PC-9 (cell line): ENCODE measurements at regions of chr3 and their contacts with region 1.

Region 1: DNA sequence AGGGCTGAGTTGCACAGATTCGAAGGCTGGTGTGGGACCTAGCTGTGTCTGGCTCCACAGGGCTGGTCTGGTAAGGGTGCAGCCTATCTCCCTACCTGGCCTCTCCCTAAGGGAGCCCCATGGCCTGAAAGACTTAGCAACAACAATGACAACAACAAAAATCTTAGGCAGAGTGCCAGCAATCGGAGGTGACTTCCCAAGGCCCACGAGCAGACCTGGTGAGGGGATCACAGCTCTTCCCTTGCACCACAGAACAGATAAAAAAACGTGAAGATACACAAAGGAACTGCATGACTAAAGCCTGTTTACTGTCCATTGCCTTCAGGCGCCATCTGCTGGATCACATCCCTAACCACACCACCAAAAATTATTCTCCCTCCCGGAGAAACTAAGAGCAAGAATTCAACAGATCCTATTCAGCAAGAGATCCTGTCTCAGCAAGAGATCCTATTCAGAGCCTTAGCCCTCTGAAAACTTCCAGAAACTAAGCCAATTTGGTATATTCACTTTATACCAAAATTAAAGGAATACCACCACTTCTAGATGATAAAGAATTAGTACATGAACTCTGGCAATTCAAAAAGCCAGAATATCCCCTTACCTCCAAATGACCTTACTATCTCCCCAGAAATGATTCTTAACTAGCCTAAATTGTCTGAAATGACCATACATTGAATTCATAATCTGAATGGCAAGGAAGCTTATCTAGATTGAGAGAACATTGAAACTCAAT is 24.1 kb upstream of the OR5K4 start:
- DNase-seq: peak; percentile 44 to 46
- H3K4me3 ChIP-seq: no peak overlapping the region
- H3K27ac ChIP-seq: no peak overlapping the region
- H3K4me1 ChIP-seq: no peaks in the 10 kb centered on the region
- H3K27me3 ChIP-seq: no peaks in the 10 kb centered on the region
- CTCF ChIP-seq: peak; percentile 91

Region 2: DNA sequence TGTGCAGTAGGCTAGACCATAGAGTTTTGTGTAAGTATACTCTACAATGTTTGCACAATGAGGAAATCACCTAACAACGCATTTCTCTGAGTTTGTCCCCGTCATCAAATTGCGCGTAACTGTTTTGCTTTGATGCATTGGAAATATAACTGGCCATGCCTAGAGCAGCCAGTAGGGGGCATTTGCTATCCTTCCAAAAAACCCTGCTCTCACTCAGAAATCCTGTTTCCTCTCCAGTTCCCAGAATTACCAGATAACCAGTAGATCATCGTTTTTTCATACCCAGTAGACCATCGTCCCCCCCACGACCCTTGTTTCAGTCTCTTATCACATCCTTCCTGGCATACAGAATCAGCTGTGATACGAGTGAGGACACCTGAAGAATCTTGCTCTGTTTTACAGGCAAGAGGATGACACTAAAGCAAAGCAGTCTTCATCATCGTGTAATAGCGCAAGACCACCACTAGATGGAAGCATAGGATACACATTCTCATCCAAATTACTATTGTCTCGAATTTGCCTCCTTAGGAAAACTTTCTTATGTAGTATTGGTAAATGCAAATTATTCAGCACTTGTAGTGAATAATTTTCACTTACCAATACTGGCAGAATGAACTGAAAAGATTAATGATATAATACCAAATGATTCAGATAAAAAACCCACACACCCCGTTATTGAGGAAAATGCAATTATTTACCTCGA is 290.1 kb before region 1 on chr3:
- CTCF ChIA-PET with region 1: interaction called, 16 read pairs
- POLR2A ChIA-PET with region 1: no interaction called
- intact Hi-C with region 1: loop called (anchors 1 kb)
- DNase-seq: peak; percentile 74 to 81
- H3K4me3 ChIP-seq: peak overlapping the region; percentile 50; the same call in 1 of the 2 replicates
- H3K27ac ChIP-seq: no peak overlapping the region
- H3K4me1 ChIP-seq: peaks cover 9% of the 10 kb centered on the region; the same call in 1 of the 2 replicates
- H3K27me3 ChIP-seq: no peaks in the 10 kb centered on the region
- CTCF ChIP-seq: peak; percentile 100

Region 3: DNA sequence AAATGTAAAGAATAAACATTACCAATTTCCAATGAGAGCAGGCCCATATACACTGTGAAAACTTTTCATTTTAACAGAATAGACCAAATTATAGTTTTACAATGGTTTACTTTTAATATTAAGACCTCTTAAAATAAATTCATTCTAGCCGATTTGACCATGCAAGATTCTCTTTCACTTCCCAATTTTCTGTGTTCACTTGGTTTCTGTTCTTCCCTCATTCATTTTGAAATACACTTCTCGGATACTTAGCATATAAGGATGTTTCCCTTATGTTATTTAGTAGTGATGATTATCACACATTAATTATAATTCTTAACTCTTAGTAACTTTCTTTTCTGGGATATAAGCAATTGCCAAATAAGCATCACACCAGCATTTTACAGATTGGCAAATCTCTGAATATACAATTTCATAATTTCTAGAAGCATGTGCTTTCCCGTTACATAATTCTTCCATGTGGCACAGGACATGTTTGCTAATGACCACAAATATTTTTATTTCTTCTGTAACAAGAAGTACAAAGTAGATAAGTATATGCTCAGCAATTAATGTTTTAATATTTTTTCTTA is 149.2 kb before region 1 on chr3:
- CTCF ChIA-PET with region 1: no interaction called
- POLR2A ChIA-PET with region 1: no interaction called
- intact Hi-C with region 1: no loop called
- DNase-seq: no peak
- H3K4me3 ChIP-seq: no peak overlapping the region
- H3K27ac ChIP-seq: no peak overlapping the region
- H3K4me1 ChIP-seq: no peaks in the 10 kb centered on the region
- H3K27me3 ChIP-seq: no peaks in the 10 kb centered on the region
- CTCF ChIP-seq: no peak

Region 4: GRCh38 chr3:98395101-98395500 is 65.5 kb after region 1 on chr3:
- CTCF ChIA-PET with region 1: no interaction called
- POLR2A ChIA-PET with region 1: no interaction called
- intact Hi-C with region 1: loop called (anchors 10 kb)
- DNase-seq: no peak
- H3K4me3 ChIP-seq: no peak overlapping the region
- H3K27ac ChIP-seq: no peak overlapping the region
- H3K4me1 ChIP-seq: no peaks in the 10 kb centered on the region
- H3K27me3 ChIP-seq: no peaks in the 10 kb centered on the region
- CTCF ChIP-seq: no peak

Region 5: GRCh38 chr3:98593046-98593936 is 263.7 kb after region 1 on chr3 and contains the start of gene CPOX:
- CTCF ChIA-PET with region 1: no interaction called
- POLR2A ChIA-PET with region 1: no interaction called
- intact Hi-C with region 1: loop called (anchors 1 kb)
- DNase-seq: peak; percentile 88 to 94
- H3K4me3 ChIP-seq: peak within 1 kb of the TSS; percentile 66
- H3K27ac ChIP-seq: peak within 1 kb of the TSS; percentile 23
- H3K4me1 ChIP-seq: peaks cover 12% of the 10 kb centered on the region
- H3K27me3 ChIP-seq: no peaks in the 10 kb centered on the region
- CTCF ChIP-seq: no peak; the same call in 1 of the 2 replicates
- total RNA-seq, gene CPOX: 30.4 and 35.2 TPM in 2 replicates

Region 6: DNA sequence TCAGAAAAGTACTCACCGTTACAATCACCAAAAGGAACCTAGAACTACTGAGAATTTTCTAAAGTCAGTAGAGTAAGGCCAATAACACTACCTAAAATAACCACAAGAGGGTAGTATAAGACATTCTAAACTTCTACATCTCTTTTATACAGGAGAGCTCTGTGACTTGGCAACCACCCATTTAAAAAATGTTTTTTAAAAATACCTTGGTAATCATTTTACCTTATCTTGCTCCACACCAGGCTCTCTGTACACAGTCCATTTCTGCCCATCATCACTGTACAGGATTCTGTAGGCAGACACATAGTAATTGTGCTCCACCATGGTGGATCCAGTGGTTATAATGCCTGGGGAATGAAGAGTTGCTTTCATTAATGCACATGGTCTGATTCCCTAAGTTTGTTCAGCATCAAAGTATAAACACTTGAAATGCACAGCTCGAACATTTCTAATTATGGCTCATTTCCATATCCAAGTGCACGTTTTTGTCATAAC is 488.0 kb after region 1 on chr3:
- CTCF ChIA-PET with region 1: no interaction called
- POLR2A ChIA-PET with region 1: no interaction called
- intact Hi-C with region 1: loop called (anchors 1 kb)
- DNase-seq: peak in 1 of 2 experiments; percentile 64
- H3K4me3 ChIP-seq: no peak overlapping the region
- H3K27ac ChIP-seq: peak overlapping the region; percentile 2; the same call in 1 of the 2 replicates
- H3K4me1 ChIP-seq: peaks cover 24% of the 10 kb centered on the region
- H3K27me3 ChIP-seq: no peaks in the 10 kb centered on the region
- CTCF ChIP-seq: peak; percentile 95